ENCODE measurements at regions of chr20 and their contacts with region 1.

Region 1: GRCh38 chr20:51800060-51800794 is 2.1 kb downstream of the SALL4 start:
- DNase-seq: peak; percentile 98
- H3K4me3 Mint-ChIP-seq: peak overlapping the region; percentile 79
- H3K27ac Mint-ChIP-seq: peak overlapping the region; percentile 40
- H3K4me1 Mint-ChIP-seq: peaks cover 33% of the 10 kb centered on the region
- H3K27me3 Mint-ChIP-seq: peaks cover 30% of the 10 kb centered on the region
- CTCF ChIP-seq: peak; percentile 99

Region 2: GRCh38 chr20:51639206-51639832 is 160.9 kb before region 1 on chr20:
- CTCF ChIA-PET with region 1: no interaction called
- intact Hi-C with region 1: loop called (anchors 5 kb)
- DNase-seq: peak; percentile 86
- H3K4me3 Mint-ChIP-seq: no peak overlapping the region
- H3K27ac Mint-ChIP-seq: no peak overlapping the region
- H3K4me1 Mint-ChIP-seq: peaks cover 9% of the 10 kb centered on the region
- H3K27me3 Mint-ChIP-seq: no peaks in the 10 kb centered on the region
- CTCF ChIP-seq: peak; percentile 98

Region 3: GRCh38 chr20:51695574-51696303 is 104.5 kb before region 1 on chr20:
- CTCF ChIA-PET with region 1: interaction called, 19 read pairs
- intact Hi-C with region 1: no loop called
- DNase-seq: peak; percentile 69
- H3K4me3 Mint-ChIP-seq: peak overlapping the region; percentile 5
- H3K27ac Mint-ChIP-seq: peak overlapping the region; percentile 81
- H3K4me1 Mint-ChIP-seq: peaks cover 47% of the 10 kb centered on the region
- H3K27me3 Mint-ChIP-seq: no peaks in the 10 kb centered on the region
- CTCF ChIP-seq: no peak

Region 4: GRCh38 chr20:51914758-51915157 is 114.5 kb after region 1 on chr20:
- CTCF ChIA-PET with region 1: no interaction called
- intact Hi-C with region 1: loop called (anchors 5 kb)
- DNase-seq: no peak
- H3K4me3 Mint-ChIP-seq: no peak overlapping the region
- H3K27ac Mint-ChIP-seq: no peak overlapping the region
- H3K4me1 Mint-ChIP-seq: peaks cover 40% of the 10 kb centered on the region
- H3K27me3 Mint-ChIP-seq: no peaks in the 10 kb centered on the region
- CTCF ChIP-seq: no peak

Region 5: GRCh38 chr20:51966291-51966971 is 166.2 kb after region 1 on chr20:
- CTCF ChIA-PET with region 1: interaction called, 16 read pairs
- intact Hi-C with region 1: loop called (anchors 1 kb)
- DNase-seq: peak; percentile 83
- H3K4me3 Mint-ChIP-seq: no peak overlapping the region
- H3K27ac Mint-ChIP-seq: no peak overlapping the region
- H3K4me1 Mint-ChIP-seq: peaks cover under 1% of the 10 kb centered on the region
- H3K27me3 Mint-ChIP-seq: no peaks in the 10 kb centered on the region
- CTCF ChIP-seq: peak; percentile 66

Region 6: DNA sequence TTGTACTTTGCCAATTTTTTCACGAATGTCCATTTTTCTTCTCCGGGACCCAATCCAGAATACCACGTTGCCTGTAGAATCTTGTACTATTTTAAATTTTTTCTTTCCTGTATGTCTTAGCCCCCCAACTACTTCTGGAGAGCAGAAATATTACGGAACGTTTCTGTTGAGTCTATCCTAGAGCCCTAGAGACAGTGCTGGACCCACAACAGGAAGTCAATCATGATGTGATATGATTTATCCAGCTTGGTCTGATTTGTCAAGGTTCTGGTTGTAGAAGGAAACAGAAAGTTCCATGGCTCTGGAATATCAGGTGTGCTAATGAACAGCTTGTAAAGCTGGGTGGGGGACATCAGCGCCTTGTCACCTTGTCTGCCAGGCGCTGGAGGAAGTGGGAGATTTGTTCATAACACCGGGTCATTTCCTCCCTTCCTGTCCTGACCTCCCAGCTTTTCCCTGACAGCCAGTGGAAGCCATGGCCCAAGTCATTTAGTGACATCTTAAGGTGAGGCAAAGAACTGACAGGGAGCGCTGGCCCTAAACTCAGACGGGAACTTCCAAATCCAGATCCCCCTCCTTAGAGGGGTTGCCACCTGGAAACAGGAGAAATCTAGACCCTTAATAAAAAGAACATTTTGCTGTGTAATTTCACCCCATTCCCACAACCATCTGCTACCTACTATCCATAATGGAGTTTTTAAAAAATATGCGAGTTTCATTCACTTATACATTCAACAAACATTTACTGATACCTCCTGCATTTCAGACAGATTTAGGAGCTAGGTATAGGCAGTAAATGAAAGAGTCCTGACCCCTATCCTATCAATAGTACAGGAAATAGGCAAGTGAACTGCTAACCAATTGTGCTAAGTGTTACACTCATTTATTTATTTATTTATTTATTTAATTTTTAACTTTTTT is 260.8 kb after region 1 on chr20:
- CTCF ChIA-PET with region 1: interaction called, 5 read pairs
- intact Hi-C with region 1: loop called (anchors 5 kb)
- DNase-seq: peak; percentile 38
- H3K4me3 Mint-ChIP-seq: no peak overlapping the region
- H3K27ac Mint-ChIP-seq: no peak overlapping the region
- H3K4me1 Mint-ChIP-seq: no peaks in the 10 kb centered on the region
- H3K27me3 Mint-ChIP-seq: no peaks in the 10 kb centered on the region
- CTCF ChIP-seq: peak; percentile 37

Region 7: GRCh38 chr20:52083627-52084232 is 283.5 kb after region 1 on chr20:
- CTCF ChIA-PET with region 1: interaction called, 15 read pairs
- intact Hi-C with region 1: loop called (anchors 1 kb)
- DNase-seq: peak; percentile 80
- H3K4me3 Mint-ChIP-seq: no peak overlapping the region
- H3K27ac Mint-ChIP-seq: no peak overlapping the region
- H3K4me1 Mint-ChIP-seq: no peaks in the 10 kb centered on the region
- H3K27me3 Mint-ChIP-seq: no peaks in the 10 kb centered on the region
- CTCF ChIP-seq: peak; percentile 88

Region 8: DNA sequence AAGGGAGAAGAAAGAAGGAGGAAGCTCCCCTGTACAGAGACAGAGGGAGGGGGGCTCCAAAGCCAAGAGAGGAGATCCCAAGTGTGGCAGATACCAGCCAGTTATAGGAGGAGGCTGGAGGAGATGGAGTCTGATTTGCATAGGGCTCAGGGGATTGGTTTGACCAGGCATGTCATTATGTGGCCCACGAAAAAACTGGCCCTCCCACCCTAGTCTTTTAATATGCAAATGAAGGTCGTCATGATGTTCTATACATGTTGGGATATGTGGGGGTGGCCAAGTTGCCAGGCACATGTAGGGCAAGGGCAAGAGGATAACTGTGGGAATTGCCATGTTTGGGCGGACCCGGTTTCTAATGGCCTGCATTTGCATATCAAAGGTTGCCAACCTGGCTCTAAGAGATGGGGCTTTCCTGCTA is 408.9 kb after region 1 on chr20:
- CTCF ChIA-PET with region 1: no interaction called
- intact Hi-C with region 1: no loop called
- DNase-seq: no peak
- H3K4me3 Mint-ChIP-seq: no peak overlapping the region
- H3K27ac Mint-ChIP-seq: no peak overlapping the region
- H3K4me1 Mint-ChIP-seq: no peaks in the 10 kb centered on the region
- H3K27me3 Mint-ChIP-seq: peaks cover 50% of the 10 kb centered on the region
- CTCF ChIP-seq: no peak